Activated T-helper 2 cell treated with anti-CD3 and anti-CD28 coated beads, Interferon-gamma antibody, Interleukin-2, Interleukin-4, amounts not matched to agents 10 μg/mL and 5 μg/mL and 100 μg/mL, durations not matched to agents 14 hours and 24 hours and 36 hours (primary cell): ENCODE measurements at regions of chr13 and their contacts with region 1.

Region 1: GRCh38 chr13:44259045-44260027 is 114.3 kb upstream of the SERP2 start:
- DNase-seq: peak; percentile 47
- H3K4me3 Mint-ChIP-seq: peak overlapping the region; percentile 70
- H3K27ac Mint-ChIP-seq: peak overlapping the region; percentile 72
- H3K4me1 Mint-ChIP-seq: peaks cover 14% of the 10 kb centered on the region
- H3K27me3 Mint-ChIP-seq: peaks cover 49% of the 10 kb centered on the region

Region 2: GRCh38 chr13:44237276-44237767 is 22.0 kb before region 1 on chr13:
- intact Hi-C with region 1: loop called (anchors 1 kb)
- DNase-seq: no peak
- H3K4me3 Mint-ChIP-seq: no peak overlapping the region
- H3K27ac Mint-ChIP-seq: no peak overlapping the region
- H3K4me1 Mint-ChIP-seq: peaks cover 6% of the 10 kb centered on the region
- H3K27me3 Mint-ChIP-seq: peaks cover 47% of the 10 kb centered on the region

Region 3: GRCh38 chr13:44274452-44275205 is 15.3 kb after region 1 on chr13:
- intact Hi-C with region 1: loop called (anchors 1 kb)
- DNase-seq: no peak
- H3K4me3 Mint-ChIP-seq: peak overlapping the region; percentile 46
- H3K27ac Mint-ChIP-seq: peak overlapping the region; percentile 73
- H3K4me1 Mint-ChIP-seq: peaks cover 30% of the 10 kb centered on the region
- H3K27me3 Mint-ChIP-seq: peaks cover 18% of the 10 kb centered on the region